Posterior cingulate gyrus (tissue), 11 donors: ENCODE measurements at regions of chr5 and their contacts with region 1.

Region 1: DNA sequence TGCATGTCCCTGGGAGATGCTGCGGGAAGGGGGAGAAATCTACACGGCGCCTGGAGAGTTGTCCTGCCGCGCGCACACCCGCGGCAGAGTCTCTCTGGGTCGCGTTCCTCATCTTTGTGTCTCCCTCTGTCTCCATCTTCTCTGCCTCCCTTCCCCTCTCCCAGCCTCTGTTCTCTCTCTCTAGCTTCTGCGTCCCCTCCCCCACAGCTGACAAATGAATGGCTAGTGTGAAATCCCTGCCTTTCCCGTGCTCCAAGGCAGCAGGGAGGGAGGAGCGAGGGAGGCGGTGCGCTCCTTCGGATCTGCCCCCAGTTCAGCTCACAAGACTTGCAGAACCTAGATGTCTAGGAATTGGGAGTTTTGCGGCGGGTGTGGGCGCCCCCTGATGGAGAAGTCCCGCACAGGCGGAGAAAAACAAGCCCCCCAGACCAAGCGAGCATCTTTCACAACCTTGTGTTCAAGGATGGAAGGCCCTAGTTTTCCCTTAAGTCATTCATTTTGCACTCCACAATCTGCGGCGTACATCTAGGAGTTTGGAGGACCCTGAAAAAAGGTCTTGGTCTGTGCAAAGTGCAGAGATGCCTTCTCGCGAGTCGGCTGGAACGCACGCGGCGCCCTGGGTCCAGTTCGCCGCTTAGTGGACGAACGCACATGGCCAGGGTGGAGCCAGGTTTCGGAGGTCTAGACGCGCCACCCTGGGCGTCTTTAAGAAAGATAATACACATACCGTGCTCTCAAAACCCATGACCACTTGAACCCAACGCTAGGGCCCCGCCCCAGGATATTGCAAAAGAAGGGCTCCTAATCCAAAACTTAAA is 2.0 kb downstream of the VCAN start:
- DNase-seq: peak; percentile 63 to 97 (median 80)

Region 2: DNA sequence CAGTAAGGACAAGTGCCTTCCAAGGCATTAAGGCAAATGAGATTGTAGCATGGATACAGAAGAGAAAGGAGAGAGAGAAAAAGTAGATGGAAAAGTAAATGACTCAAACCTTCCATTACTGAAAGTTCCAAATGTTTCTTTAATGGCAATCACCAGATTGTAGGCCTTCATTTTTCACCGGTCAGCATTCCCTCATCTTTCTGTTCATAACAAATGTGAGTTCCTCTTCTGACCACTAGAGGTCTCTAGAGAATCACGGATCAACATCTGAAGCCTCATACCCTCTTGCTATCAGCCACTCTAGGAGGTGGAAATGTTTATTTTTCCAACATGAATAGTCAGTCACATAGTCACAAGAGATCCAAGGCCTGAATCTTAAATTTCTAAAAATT is 1121.8 kb before region 1 on chr5:
- intact Hi-C with region 1: loop called (anchors 5 kb)
- DNase-seq: no peak

Region 3: DNA sequence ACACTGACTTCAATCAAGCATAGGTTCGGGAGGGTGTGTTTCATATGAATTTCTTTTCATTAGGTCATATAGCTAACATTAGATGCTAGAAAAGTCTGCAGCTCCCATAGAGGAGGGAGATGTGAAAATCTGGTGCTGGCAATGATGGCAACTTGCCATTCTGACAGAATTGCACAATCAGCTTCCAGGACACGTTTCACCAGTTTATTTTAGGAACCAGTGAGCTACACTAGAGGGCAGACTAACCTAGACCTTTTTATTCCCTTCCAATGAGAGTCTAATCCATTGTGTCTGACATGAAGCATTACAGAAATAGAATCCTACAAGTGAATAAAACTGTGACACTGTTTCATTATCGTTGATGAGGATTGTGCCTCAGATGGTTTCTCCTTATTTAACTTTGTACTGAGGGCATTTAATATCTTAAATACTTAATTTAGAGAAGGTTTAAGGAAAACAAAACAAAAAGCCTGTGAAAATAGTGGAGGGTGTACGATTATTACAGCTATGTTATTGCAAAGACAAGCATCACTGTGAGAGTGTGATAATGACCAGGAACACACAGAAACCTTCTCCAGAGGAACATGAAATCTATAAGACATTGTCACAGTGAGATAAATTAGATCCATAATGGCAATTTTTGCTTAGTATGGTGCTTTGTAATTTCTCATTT is 832.1 kb before region 1 on chr5:
- intact Hi-C with region 1: loop called (anchors 5 kb)
- DNase-seq: peak in 7 of 10 donors; percentile 13 to 86 (median 43)

Region 4: GRCh38 chr5:83076742-83077661 is 396.6 kb before region 1 on chr5 and contains the starts of genes TMEM167A and XRCC4:
- intact Hi-C with region 1: loop called (anchors 1 kb)
- DNase-seq: peak; percentile 94 to 99 (median 97)